GM23248 (cell line): ENCODE measurements at regions of chr15 and their contacts with region 1.

Region 1: DNA sequence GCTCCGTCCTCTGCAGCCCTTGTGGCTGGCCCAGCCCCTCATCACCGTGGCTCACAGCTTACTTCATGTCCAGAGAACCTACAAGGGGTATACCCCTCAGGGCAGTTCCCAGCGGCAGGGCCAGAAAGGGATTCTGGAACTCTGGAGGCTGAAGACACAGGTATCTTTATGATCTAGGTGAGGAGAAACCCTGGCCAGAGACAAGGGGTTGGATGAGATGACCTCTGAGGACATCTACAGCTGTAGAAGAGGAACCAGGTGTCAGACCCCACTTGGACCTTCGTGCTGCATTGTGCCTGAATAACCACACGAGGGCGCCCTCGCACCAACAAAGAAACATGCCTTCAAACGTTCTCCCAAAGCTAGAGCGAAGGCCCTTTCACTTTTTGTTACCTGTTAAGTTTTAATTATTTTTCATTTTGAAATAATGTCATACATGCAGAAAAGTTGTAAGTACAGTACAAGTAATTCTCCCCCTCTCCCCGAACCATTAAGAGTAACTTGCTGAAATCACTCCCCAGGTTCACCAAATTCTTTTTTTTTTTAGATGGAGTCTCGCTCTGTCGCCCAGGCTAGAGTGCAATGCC is 118.7 kb upstream of the SMAD3 start:
- DNase-seq: peak; percentile 68
- H3K4me3 ChIP-seq: no peak overlapping the region
- H3K27ac ChIP-seq: no peak overlapping the region
- H3K4me1 ChIP-seq: peaks cover 6% of the 10 kb centered on the region; the same call in 1 of the 2 replicates
- H3K27me3 ChIP-seq: no peaks in the 10 kb centered on the region

Region 2: GRCh38 chr15:66630801-66631351 is 315.8 kb before region 1 on chr15:
- in situ Hi-C with region 1: no loop called
- DNase-seq: no peak
- H3K4me3 ChIP-seq: no peak overlapping the region
- H3K27ac ChIP-seq: no peak overlapping the region
- H3K4me1 ChIP-seq: no peaks in the 10 kb centered on the region
- H3K27me3 ChIP-seq: no peaks in the 10 kb centered on the region

Region 3: GRCh38 chr15:67216896-67217295 is 270.2 kb after region 1 on chr15:
- in situ Hi-C with region 1: no loop called
- DNase-seq: no peak
- H3K4me3 ChIP-seq: no peak overlapping the region
- H3K27ac ChIP-seq: no peak overlapping the region
- H3K4me1 ChIP-seq: 0 out of 2 replicates have a peak, but pooled peaks cover 4% of the 10 kb centered on the region
- H3K27me3 ChIP-seq: no peaks in the 10 kb centered on the region

Region 4: GRCh38 chr15:67303490-67304363 is 357.1 kb after region 1 on chr15:
- in situ Hi-C with region 1: loop called (anchors 10 kb)
- DNase-seq: peak; percentile 47
- H3K4me3 ChIP-seq: no peak overlapping the region
- H3K27ac ChIP-seq: no peak overlapping the region
- H3K4me1 ChIP-seq: 0 out of 2 replicates have a peak, but pooled peaks cover 4% of the 10 kb centered on the region
- H3K27me3 ChIP-seq: no peaks in the 10 kb centered on the region

Region 5: DNA sequence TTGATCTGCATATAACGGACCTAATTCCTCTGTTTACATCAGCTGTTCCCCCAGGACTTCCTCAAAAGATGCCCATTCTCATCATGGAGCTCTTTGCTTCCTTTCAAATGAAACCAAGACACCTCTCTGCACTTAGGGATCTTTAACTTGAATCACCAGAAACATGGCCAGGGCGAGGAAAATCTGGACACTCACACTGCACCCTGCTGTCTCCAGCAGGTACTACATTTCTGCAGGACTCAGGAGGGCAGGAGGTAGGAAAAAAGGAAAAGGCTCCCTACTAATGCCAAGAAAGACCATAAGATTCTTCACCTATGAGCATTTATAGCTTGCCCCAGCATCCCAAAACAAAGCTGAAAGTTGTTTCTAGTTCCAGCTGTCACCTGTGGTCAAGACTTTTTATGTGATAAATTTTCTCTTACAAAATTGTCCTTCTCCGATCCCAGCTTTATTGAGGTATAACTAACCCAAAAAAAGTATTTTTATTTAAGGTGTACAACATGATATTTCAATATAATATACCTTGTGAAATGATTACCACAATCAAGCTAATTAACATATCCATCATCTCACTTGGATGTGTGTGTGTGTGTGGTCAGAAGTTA is 486.9 kb after region 1 on chr15:
- in situ Hi-C with region 1: loop called (anchors 25 kb)
- DNase-seq: peak; percentile 73
- H3K4me3 ChIP-seq: no peak overlapping the region
- H3K27ac ChIP-seq: no peak overlapping the region
- H3K4me1 ChIP-seq: no peaks in the 10 kb centered on the region
- H3K27me3 ChIP-seq: no peaks in the 10 kb centered on the region

Region 6: GRCh38 chr15:67839929-67840748 is 893.5 kb after region 1 on chr15 and contains the start of gene RNU6-1:
- in situ Hi-C with region 1: loop called (anchors 10 kb)
- DNase-seq: peak; percentile 96
- H3K4me3 ChIP-seq: peak within 1 kb of the TSS; percentile 84
- H3K27ac ChIP-seq: peak within 1 kb of the TSS; percentile 78
- H3K4me1 ChIP-seq: no peaks in the 10 kb centered on the region
- H3K27me3 ChIP-seq: peaks cover 9% of the 10 kb centered on the region
- total RNA-seq, gene RNU6-1: not detected in 2 replicates